ENCODE measurements at regions of chr1 and their contacts with region 1.

Region 1: DNA sequence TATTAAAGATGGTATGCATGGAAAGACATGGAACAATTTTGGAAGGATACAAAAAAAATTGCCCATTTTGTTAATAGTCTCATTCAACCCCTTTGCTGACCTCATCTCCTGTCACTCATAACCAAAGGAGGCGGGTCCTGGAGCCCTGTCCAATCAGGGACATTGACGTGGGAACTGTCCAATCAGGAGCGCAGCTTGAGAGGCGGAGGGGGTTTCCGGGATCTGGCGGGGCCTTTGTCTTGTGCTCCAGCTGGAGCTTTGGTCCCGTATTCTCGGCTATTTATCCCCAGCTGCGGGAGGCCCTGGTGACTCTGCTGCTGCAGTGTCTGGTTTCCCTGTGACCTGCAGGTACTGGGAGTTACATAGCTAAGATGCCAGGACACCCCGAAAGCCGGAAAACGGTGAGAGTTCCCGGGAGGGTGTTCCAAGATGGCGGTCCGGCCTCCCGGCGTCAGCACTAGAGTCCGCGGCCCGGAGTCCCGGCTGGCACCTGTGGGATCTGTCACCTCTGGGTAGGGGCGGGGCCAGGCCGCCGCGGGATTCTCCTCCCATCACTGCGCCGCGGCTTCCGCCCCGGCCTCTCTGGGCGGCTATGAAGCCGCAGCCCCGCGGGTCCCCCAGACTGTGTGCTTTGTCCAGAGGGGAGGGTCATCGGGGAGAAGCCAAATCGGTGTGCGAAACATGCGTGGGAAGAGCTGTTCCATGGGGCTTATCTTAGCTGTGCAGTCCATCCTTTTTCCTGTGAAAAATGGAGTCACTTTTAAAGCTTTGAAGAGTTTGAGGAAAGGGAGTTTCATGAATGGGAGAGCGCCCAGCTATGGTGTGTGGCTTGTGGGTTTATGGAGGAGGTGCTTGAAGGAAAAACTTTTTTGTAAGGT is at the start of gene ZNF678:
- DNase-seq: peak; percentile 100
- ATAC-seq: peak; percentile 97
- H3K4me3 ChIP-seq: peak within 1 kb of the TSS; percentile 74
- H3K27ac ChIP-seq: peak within 1 kb of the TSS; percentile 84
- H3K4me1 ChIP-seq: peaks cover 7% of the 10 kb centered on the region; the same call in 1 of the 2 replicates
- H3K27me3 ChIP-seq: no peaks in the 10 kb centered on the region
- CTCF ChIP-seq: no peak
- total RNA-seq, gene ZNF678: 22.6 and 25.3 TPM in 2 replicates

Region 2: DNA sequence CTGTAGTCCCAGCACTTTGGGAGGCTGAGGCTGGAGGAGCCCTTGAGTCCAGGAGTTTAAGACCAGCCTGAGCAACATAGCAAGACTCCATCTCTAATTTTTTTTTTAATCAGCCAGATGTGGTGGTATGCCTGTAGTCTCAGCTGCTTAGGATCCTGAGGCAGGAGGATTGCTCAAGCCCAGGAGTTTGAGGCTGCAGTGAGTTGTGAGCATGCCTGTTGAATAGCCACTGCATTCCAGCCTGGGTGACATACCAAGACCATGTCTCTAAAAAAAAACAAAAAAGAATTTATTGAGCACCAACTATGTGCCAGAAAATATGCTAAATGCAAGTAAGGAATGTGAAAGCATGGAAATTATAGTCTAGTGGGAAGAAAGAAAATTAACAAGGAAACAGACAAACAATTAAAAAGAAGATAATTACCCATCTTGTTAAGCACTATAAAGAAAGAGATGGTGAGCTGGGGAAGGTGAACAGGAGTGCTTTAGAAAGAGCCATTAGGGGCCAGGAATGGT is 104.2 kb before region 1 on chr1:
- CTCF ChIA-PET with region 1: no interaction called
- POLR2A ChIA-PET with region 1: no interaction called
- intact Hi-C with region 1: no loop called
- DNase-seq: no peak
- ATAC-seq: no peak
- H3K4me3 ChIP-seq: no peak overlapping the region
- H3K27ac ChIP-seq: no peak overlapping the region
- H3K4me1 ChIP-seq: no peaks in the 10 kb centered on the region
- H3K27me3 ChIP-seq: peaks cover 51% of the 10 kb centered on the region
- CTCF ChIP-seq: no peak

Region 3: DNA sequence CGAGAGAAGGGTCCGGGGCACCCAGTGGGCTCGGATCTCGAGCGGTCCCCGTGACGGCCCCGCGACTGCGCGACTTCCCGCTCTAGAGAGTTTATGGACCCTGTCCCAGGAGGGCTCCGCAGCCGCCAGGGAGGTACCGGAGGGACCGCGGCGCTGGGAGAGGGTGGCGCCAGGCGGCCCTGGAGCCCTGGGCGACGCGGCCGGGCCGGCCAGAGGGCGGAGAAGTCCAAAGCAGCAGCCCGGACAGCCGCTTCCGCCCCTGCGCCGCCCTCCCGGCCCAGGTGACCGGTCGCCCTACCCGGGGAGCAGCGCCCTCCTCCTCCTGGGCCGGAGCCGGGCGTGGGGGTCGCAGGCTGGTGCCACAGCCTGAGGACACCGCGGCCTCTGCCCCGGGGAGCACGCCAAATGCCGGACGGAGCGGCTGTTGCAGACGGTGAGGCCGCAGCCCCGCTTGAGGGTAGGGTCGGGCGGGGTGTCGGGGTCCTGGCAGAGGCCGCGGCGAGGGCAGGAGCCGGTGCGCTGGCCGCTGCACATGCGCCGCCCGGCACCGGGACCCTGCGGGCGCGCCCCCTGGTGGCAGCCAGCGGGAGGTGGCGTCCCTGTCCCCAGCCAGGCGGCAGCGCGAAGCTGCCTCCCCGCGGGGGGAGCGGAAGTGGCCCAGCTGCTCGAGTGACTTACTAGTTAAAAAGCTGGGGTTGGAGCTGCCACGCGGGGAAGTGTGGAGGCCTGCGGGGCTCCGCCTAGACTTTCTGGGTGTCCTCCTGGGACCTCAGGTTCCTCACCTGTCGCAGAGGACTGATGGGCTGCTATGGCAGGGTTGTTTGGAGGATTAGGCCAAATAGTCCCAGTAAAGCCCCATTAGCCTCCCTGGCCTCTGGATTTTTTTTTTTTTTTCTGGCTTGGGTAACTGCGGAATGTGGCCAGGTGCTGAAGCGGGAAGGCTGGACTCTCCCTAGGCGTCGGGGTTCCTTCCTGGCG is 21.1 kb before region 1 on chr1:
- CTCF ChIA-PET with region 1: interaction called, 10 read pairs
- POLR2A ChIA-PET with region 1: no interaction called
- intact Hi-C with region 1: no loop called
- DNase-seq: peak; percentile 98
- ATAC-seq: peak; percentile 95
- H3K4me3 ChIP-seq: peak overlapping the region; percentile 66
- H3K27ac ChIP-seq: no peak overlapping the region
- H3K4me1 ChIP-seq: peaks cover 10% of the 10 kb centered on the region; the same call in 1 of the 2 replicates
- H3K27me3 ChIP-seq: no peaks in the 10 kb centered on the region
- CTCF ChIP-seq: peak; percentile 97

Region 4: GRCh38 chr1:227586733-227587132 is 23.2 kb after region 1 on chr1:
- CTCF ChIA-PET with region 1: no interaction called
- POLR2A ChIA-PET with region 1: interaction called, 27 read pairs
- intact Hi-C with region 1: no loop called
- DNase-seq: no peak
- ATAC-seq: no peak
- H3K4me3 ChIP-seq: no peak overlapping the region
- H3K27ac ChIP-seq: no peak overlapping the region
- H3K4me1 ChIP-seq: no peaks in the 10 kb centered on the region
- H3K27me3 ChIP-seq: no peaks in the 10 kb centered on the region
- CTCF ChIP-seq: no peak

Region 5: GRCh38 chr1:227728059-227728891 is 164.7 kb after region 1 on chr1:
- CTCF ChIA-PET with region 1: no interaction called
- POLR2A ChIA-PET with region 1: no interaction called
- intact Hi-C with region 1: loop called (anchors 5 kb)
- DNase-seq: peak; percentile 98
- ATAC-seq: peak; percentile 89
- H3K4me3 ChIP-seq: peak overlapping the region; percentile 82
- H3K27ac ChIP-seq: peak overlapping the region; percentile 29
- H3K4me1 ChIP-seq: peaks cover 19% of the 10 kb centered on the region
- H3K27me3 ChIP-seq: no peaks in the 10 kb centered on the region
- CTCF ChIP-seq: 0 out of 2 replicates have a peak, but pooled peaks have one; percentile 14

Region 6: DNA sequence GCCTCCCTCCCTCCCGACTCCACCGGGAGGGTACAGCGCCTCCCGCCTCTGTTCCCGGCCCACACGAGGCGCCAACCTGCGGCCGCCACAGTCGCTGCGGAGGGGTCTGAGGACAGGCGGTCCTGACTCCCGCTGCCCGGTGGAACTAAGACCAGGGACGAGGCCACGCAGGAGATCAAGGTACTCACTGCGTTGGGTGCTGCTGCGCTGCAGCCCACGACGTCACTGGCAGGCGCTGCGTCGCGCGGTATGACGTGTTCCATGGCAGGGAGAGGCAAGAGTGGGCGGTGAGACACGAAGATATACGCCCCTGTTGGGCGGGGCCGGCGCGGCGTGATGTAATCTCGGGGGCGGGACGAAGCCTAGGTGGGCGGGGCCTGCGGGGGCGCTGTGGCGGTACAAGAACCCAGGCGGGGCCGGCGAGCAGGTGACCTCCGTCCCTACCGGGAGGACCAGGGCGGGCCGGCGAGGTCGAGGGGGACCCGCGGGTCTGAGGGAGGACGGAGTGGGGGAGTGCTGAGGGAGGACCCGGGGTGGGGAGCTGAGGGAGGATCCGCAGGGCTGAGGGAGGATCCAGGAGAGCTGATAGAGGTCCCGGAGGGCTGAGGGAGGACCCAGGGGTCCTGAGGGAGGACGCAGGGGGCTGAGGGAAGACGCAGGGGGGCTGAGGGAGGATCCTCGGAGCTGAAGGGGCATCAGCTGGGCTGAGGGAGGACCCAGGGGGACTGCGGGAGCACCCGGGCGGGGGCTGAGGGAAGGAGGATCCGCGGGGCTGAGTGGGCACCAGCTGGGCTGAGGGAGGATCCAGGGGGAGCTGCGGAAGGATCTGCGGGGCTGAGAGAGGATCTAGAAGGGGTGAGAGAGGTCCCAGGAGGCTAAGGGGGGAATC is 545.8 kb after region 1 on chr1 and contains the start of gene MRPL55:
- CTCF ChIA-PET with region 1: no interaction called
- POLR2A ChIA-PET with region 1: no interaction called
- intact Hi-C with region 1: loop called (anchors 10 kb)
- DNase-seq: peak; percentile 100
- ATAC-seq: peak; percentile 86
- H3K4me3 ChIP-seq: peak within 1 kb of the TSS; percentile 87
- H3K27ac ChIP-seq: peak within 1 kb of the TSS; percentile 31
- H3K4me1 ChIP-seq: peaks cover 19% of the 10 kb centered on the region
- H3K27me3 ChIP-seq: no peaks in the 10 kb centered on the region
- CTCF ChIP-seq: peak; percentile 37; the same call in 1 of the 2 replicates
- total RNA-seq, gene MRPL55: 343 and 375 TPM in 2 replicates

Measured in PC-3 (cell line).